ENCODE measurements at regions of chr9 and their contacts with region 1.

Region 1: DNA sequence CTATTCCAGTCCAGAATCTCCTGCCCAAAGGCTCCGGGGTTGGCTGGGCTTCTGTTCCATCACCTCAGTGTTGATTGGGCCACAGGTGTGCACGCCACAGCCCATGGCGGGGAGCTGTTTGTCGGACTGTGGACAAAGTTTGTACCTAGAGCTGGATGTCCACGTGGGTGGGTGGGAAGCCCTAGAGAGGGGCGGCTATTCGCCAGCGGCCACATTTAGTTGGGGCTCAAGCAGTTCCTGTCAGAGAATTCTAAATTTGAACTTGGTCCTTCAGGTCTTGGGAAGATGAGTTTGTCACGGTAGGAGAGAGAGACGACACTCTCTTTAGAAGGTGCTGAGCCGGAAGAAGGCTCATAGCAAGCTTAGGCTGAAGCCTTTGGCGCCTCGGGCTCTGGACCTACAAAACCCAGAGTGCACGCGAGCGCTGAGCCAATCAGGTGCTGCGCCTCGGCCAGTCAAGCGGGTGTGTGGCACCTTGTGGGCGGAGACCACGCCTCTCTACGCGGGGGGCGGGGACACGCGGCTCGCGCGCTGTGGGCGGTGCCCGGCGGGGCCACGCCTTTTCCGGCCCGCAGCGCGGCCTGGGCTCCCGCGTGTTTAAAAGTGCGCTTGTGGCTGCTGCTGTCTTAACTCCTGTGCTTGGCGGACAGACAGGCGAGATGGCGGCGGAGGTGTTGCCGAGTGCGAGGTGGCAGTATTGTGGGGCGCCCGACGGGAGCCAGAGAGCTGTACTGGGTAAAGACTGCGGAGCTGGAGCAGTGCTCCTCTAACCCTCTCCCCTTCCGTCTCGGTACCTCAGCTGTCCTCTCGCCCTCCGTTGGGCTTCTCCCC is at the start of gene POLR1E:
- DNase-seq: peak; percentile 90 to 98 (median 96)
- ATAC-seq: peak; percentile 97
- H3K4me3 ChIP-seq: peak within 1 kb of the TSS; percentile 73 to 81
- H3K4me3 Mint-ChIP-seq: peak within 1 kb of the TSS; percentile 95
- H3K27ac ChIP-seq: peak within 1 kb of the TSS; percentile 72 to 80
- H3K27ac Mint-ChIP-seq: peak within 1 kb of the TSS; percentile 95
- H3K4me1 ChIP-seq: peaks cover 26% of the 10 kb centered on the region
- H3K4me1 Mint-ChIP-seq: peaks cover 45% of the 10 kb centered on the region
- H3K27me3 ChIP-seq: peaks cover 0 to 4% of the 10 kb centered on the region in 2 experiments
- H3K27me3 Mint-ChIP-seq: peaks cover 7% of the 10 kb centered on the region
- CTCF ChIP-seq: no peak
- total RNA-seq, gene POLR1E: 27.2 to 27.8 TPM

Region 2: DNA sequence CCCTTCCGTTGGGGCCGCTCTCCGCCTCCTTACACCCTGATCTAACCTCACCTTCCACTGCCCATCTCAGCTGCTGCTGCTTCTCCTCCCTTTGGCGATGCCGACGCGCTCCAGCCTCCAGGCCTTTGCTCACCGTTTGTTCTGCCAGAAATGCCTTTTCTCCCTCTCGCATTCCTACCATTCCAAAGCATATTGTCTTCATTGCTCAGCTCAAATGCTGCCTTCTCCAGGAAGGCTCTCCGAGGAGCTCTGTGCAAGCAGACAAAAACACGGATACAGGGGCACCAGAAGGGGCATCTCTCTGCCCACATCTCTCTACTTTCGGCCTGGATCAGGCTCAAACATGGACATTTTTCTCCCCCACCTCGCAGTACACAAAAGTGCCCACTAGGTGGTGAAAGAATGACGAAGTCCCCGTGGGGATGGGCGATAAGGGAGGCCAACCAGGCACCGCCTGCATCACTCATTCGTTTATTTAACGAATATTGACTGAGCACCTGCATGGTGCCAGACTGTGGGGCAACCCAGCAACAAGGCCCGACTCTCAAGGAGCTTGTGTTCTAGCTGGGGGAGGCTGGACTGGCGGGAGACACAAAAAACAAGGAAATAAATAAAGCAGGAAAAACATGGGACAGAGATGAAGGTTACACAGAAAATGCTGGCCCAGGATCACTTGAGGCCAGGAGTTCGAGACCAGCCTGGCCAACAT is 70.4 kb before region 1 on chr9:
- CTCF ChIA-PET with region 1: interaction called, 5 read pairs
- POLR2A ChIA-PET with region 1: no interaction called
- intact Hi-C with region 1: loop called in 1 of 2 experiments (anchors 2 kb)
- DNase-seq: peak; percentile 58 to 83 (median 75)
- ATAC-seq: peak; percentile 98
- H3K4me3 ChIP-seq: no peak overlapping the region
- H3K4me3 Mint-ChIP-seq: peak overlapping the region; percentile 69
- H3K27ac ChIP-seq: no peak overlapping the region
- H3K27ac Mint-ChIP-seq: peak overlapping the region; percentile 33
- H3K4me1 ChIP-seq: peaks cover 8% of the 10 kb centered on the region
- H3K4me1 Mint-ChIP-seq: peaks cover 7% of the 10 kb centered on the region
- H3K27me3 ChIP-seq: no peaks in the 10 kb centered on the region
- H3K27me3 Mint-ChIP-seq: no peaks in the 10 kb centered on the region
- CTCF ChIP-seq: peak; percentile 89

Region 3: GRCh38 chr9:37449862-37450632 is 35.6 kb before region 1 on chr9:
- CTCF ChIA-PET with region 1: no interaction called
- POLR2A ChIA-PET with region 1: no interaction called
- intact Hi-C with region 1: loop called in 1 of 2 experiments (anchors 5 kb)
- DNase-seq: no peak
- ATAC-seq: no peak
- H3K4me3 ChIP-seq: no peak overlapping the region
- H3K4me3 Mint-ChIP-seq: no peak overlapping the region
- H3K27ac ChIP-seq: no peak overlapping the region
- H3K27ac Mint-ChIP-seq: no peak overlapping the region
- H3K4me1 ChIP-seq: no peaks in the 10 kb centered on the region
- H3K4me1 Mint-ChIP-seq: peaks cover 45% of the 10 kb centered on the region
- H3K27me3 ChIP-seq: no peaks in the 10 kb centered on the region
- H3K27me3 Mint-ChIP-seq: no peaks in the 10 kb centered on the region
- CTCF ChIP-seq: no peak

Region 4: GRCh38 chr9:37784616-37785483 is 299.2 kb after region 1 on chr9 and contains the start of gene EXOSC3:
- CTCF ChIA-PET with region 1: no interaction called
- POLR2A ChIA-PET with region 1: no interaction called
- intact Hi-C with region 1: loop called in 1 of 2 experiments (anchors 10 kb)
- DNase-seq: peak; percentile 58 to 92 (median 84)
- ATAC-seq: peak; percentile 83
- H3K4me3 ChIP-seq: peak within 1 kb of the TSS; percentile 98
- H3K4me3 Mint-ChIP-seq: peak within 1 kb of the TSS; percentile 97
- H3K27ac ChIP-seq: peak within 1 kb of the TSS; percentile 75 to 88
- H3K27ac Mint-ChIP-seq: peak within 1 kb of the TSS; percentile 96
- H3K4me1 ChIP-seq: peaks cover 24% of the 10 kb centered on the region
- H3K4me1 Mint-ChIP-seq: peaks cover 42% of the 10 kb centered on the region
- H3K27me3 ChIP-seq: no peaks in the 10 kb centered on the region
- H3K27me3 Mint-ChIP-seq: peaks cover 4% of the 10 kb centered on the region
- CTCF ChIP-seq: no peak
- total RNA-seq, gene EXOSC3: 34.2 to 45.9 TPM

Region 5: GRCh38 chr9:38068866-38069629 is 583.4 kb after region 1 on chr9 and contains the start of gene SHB:
- CTCF ChIA-PET with region 1: no interaction called
- POLR2A ChIA-PET with region 1: no interaction called
- intact Hi-C with region 1: loop called in 1 of 2 experiments (anchors 5 kb)
- DNase-seq: peak; percentile 68 to 90 (median 83)
- ATAC-seq: peak; percentile 81
- H3K4me3 ChIP-seq: peak within 1 kb of the TSS; percentile 78 to 88
- H3K4me3 Mint-ChIP-seq: peak within 1 kb of the TSS; percentile 85
- H3K27ac ChIP-seq: peak within 1 kb of the TSS; percentile 39 to 42
- H3K27ac Mint-ChIP-seq: peak within 1 kb of the TSS; percentile 74
- H3K4me1 ChIP-seq: peaks cover 24% of the 10 kb centered on the region
- H3K4me1 Mint-ChIP-seq: peaks cover 24% of the 10 kb centered on the region
- H3K27me3 ChIP-seq: peaks cover 3 to 4% of the 10 kb centered on the region in 2 experiments
- H3K27me3 Mint-ChIP-seq: no peaks in the 10 kb centered on the region
- CTCF ChIP-seq: peak; percentile 26
- total RNA-seq, gene SHB: 2.4 to 3.0 TPM